H1 (cell line): ENCODE measurements at regions of chr3 and their contacts with region 1.

Region 1: DNA sequence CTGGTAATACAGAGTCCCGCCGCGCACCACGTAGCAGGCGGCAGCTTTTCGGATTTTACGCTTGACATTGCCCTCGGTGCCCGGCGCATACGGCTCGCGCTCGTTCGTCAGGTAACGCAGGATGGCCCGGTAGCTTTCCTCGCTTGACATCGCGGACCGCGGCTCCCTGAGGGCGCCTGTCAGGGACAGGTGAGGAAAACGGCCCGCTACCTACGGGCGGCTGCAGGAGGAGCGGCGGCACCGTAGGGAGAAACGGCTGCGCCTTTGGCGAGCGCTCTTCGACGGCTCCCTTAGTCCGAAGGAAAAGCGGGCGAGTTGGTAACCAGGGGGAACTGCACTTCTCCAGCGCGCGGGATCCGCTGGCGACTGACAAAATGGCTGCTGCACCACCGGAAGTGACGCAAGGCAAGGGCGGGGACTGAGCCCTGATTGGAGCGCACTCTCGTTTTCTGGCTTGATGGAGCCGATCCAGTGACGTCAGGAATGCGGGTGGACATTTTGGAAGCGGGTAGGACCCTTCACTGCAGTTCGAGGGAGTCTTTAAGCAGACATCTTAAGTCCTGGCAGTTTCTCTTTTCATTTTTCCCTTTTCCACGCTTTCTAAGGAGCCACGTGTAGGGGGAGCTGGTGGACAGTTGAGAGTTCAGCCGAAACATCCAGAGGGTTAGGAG is at the start of gene ZBTB11:
- DNase-seq: peak; percentile 99 to 100
- H3K4me3 ChIP-seq: peak within 1 kb of the TSS; percentile 72 to 98 (median 85)
- H3K27ac ChIP-seq: peak within 1 kb of the TSS; percentile 77
- H3K4me1 ChIP-seq: no peaks in the 10 kb centered on the region; a peak in 2 of 7 replicates
- H3K27me3 ChIP-seq: no peaks in the 10 kb centered on the region
- CTCF ChIP-seq: peak; percentile 41 to 71 (median 43)
- EP300 ChIP-seq: no peak
- POLR2A ChIP-seq: peak in 1 of 2 experiments; percentile 62; a peak in 1 of 3 replicates
- RAD21 ChIP-seq: peak; percentile 48 to 56
- total RNA-seq, gene ZBTB11: 14.0 and 14.3 TPM in 2 replicates

Region 2: GRCh38 chr3:101573449-101574387 is 103.2 kb before region 1 on chr3 and contains the start of gene PCNP:
- CTCF ChIA-PET with region 1: interaction called, 7 read pairs
- POLR2A ChIA-PET with region 1: interaction called, 53 read pairs
- DNase-seq: peak; percentile 90 to 98
- H3K4me3 ChIP-seq: peak within 1 kb of the TSS; percentile 82 to 98 (median 91)
- H3K27ac ChIP-seq: peak within 1 kb of the TSS; percentile 96
- H3K4me1 ChIP-seq: peaks cover 0 to 3% (median 0%) of the 10 kb centered on the region in 4 experiments; a peak in 2 of 7 replicates
- H3K27me3 ChIP-seq: no peaks in the 10 kb centered on the region; a peak in 1 of 7 replicates
- CTCF ChIP-seq: peak in 2 of 3 experiments; percentile 58 to 80; a peak in 3 of 4 replicates
- EP300 ChIP-seq: peak in 1 of 2 experiments; percentile 53; a peak in 1 of 3 replicates
- POLR2A ChIP-seq: peak; percentile 85 to 93
- RAD21 ChIP-seq: peak; percentile 68 to 73
- total RNA-seq, gene PCNP: 188 and 192 TPM in 2 replicates

Region 3: GRCh38 chr3:101665851-101666250 is 11.0 kb before region 1 on chr3:
- CTCF ChIA-PET with region 1: interaction called, 7 read pairs
- POLR2A ChIA-PET with region 1: interaction called, 308 read pairs
- DNase-seq: no peak
- H3K4me3 ChIP-seq: no peak overlapping the region
- H3K27ac ChIP-seq: no peak overlapping the region
- H3K4me1 ChIP-seq: no peaks in the 10 kb centered on the region
- H3K27me3 ChIP-seq: no peaks in the 10 kb centered on the region
- CTCF ChIP-seq: no peak
- EP300 ChIP-seq: no peak
- POLR2A ChIP-seq: no peak
- RAD21 ChIP-seq: no peak

Region 4: DNA sequence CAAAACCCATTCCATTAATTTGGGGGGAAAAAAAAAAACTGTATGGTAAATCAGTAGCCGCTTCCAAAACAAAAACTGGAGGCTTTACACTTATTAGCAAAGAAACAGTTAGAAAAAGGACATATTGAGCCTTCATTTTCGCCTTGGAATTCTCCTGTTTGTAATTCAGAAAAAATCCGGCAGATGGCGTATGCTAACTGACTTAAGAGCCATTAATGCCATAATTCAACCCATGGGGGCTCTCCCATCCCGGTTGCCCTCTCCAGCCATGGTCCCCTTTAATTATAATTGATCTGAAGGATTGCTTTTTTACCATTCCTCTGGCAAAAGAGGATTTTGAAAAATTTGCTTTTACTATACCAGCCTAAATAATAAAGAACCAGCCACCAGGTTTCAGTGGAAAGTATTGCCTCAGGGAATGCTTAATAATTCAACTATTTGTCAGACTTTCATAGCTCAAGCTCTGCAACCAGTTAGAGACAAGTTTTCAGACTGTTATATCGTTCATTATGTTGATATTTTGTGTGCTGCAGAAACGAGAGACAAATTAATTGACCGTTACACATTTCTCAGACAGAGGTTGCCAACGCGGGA is 19.0 kb after region 1 on chr3:
- CTCF ChIA-PET with region 1: interaction called, 14 read pairs
- POLR2A ChIA-PET with region 1: interaction called, 308 read pairs
- DNase-seq: no peak
- H3K4me3 ChIP-seq: no peak overlapping the region
- H3K27ac ChIP-seq: no peak overlapping the region
- H3K4me1 ChIP-seq: peaks cover 0 to 3% (median 0%) of the 10 kb centered on the region in 4 experiments; a peak in 2 of 7 replicates
- H3K27me3 ChIP-seq: no peaks in the 10 kb centered on the region
- CTCF ChIP-seq: peak in 2 of 3 experiments; percentile 58 to 73; a peak in 2 of 4 replicates
- EP300 ChIP-seq: no peak
- POLR2A ChIP-seq: no peak
- RAD21 ChIP-seq: peak; percentile 68 to 75

Region 5: GRCh38 chr3:101703169-101703568 is 26.3 kb after region 1 on chr3:
- CTCF ChIA-PET with region 1: interaction called, 11 read pairs
- POLR2A ChIA-PET with region 1: interaction called, 5 read pairs
- DNase-seq: no peak
- H3K4me3 ChIP-seq: no peak overlapping the region
- H3K27ac ChIP-seq: no peak overlapping the region
- H3K4me1 ChIP-seq: no peaks in the 10 kb centered on the region
- H3K27me3 ChIP-seq: no peaks in the 10 kb centered on the region
- CTCF ChIP-seq: no peak
- EP300 ChIP-seq: no peak
- POLR2A ChIP-seq: no peak
- RAD21 ChIP-seq: no peak

Region 6: GRCh38 chr3:101803173-101803782 is 126.4 kb after region 1 on chr3:
- CTCF ChIA-PET with region 1: no interaction called
- POLR2A ChIA-PET with region 1: no interaction called
- DNase-seq: no peak
- H3K4me3 ChIP-seq: no peak overlapping the region
- H3K27ac ChIP-seq: no peak overlapping the region
- H3K4me1 ChIP-seq: no peaks in the 10 kb centered on the region
- H3K27me3 ChIP-seq: no peaks in the 10 kb centered on the region
- CTCF ChIP-seq: peak in 2 of 3 experiments; percentile 45 to 77; a peak in 2 of 4 replicates
- EP300 ChIP-seq: no peak
- POLR2A ChIP-seq: no peak
- RAD21 ChIP-seq: peak; percentile 53